ENCODE measurements at regions of chr12 and their contacts with region 1.

Region 1: GRCh38 chr12:85920324-85920947 is 46.3 kb downstream of the NTS start:
- DNase-seq: no peak
- H3K4me3 Mint-ChIP-seq: no peak overlapping the region
- H3K27ac Mint-ChIP-seq: no peak overlapping the region
- H3K4me1 Mint-ChIP-seq: no peaks in the 10 kb centered on the region
- H3K27me3 Mint-ChIP-seq: no peaks in the 10 kb centered on the region

Region 2: DNA sequence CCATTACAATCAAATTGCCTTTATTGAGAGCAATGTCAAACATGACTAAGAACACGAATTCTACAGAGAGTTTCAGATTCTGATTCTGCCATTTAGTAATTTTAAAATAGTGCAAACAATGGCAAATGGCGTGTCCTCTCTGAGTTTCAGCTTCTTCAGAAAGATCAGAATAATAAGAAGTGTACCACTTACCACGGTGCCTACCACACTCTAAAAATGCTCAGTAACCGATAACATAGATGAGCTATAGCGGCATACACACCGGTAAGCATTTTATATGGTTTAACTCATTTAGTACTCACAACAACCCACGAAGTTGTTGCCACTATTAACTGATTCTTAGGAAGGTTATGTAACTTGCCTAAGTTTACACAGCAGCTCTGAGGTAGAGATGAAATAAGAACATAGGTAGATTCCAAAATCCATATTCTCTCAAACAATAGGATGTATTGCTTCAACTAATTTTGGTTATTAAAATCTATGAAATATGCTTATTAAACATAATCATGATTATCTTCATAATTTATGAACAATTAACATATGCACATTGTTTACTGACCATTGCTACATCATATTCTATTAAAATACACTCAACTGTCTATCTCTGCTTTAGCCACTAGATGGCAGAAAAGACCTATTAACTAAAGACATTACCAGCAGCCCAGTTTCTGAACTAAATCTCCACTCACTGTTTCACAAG is 1046.2 kb before region 1 on chr12:
- CTCF ChIA-PET with region 1: interaction called, 4 read pairs
- intact Hi-C with region 1: loop called (anchors 1 kb)
- DNase-seq: no peak
- H3K4me3 Mint-ChIP-seq: no peak overlapping the region
- H3K27ac Mint-ChIP-seq: no peak overlapping the region
- H3K4me1 Mint-ChIP-seq: no peaks in the 10 kb centered on the region
- H3K27me3 Mint-ChIP-seq: no peaks in the 10 kb centered on the region

Region 3: GRCh38 chr12:85076688-85077430 is 843.6 kb before region 1 on chr12:
- CTCF ChIA-PET with region 1: no interaction called
- intact Hi-C with region 1: loop called (anchors 1 kb)
- DNase-seq: no peak
- H3K4me3 Mint-ChIP-seq: no peak overlapping the region
- H3K27ac Mint-ChIP-seq: no peak overlapping the region
- H3K4me1 Mint-ChIP-seq: no peaks in the 10 kb centered on the region
- H3K27me3 Mint-ChIP-seq: no peaks in the 10 kb centered on the region

Region 4: GRCh38 chr12:85280165-85280983 is 640.1 kb before region 1 on chr12 and contains the start of gene ALX1:
- CTCF ChIA-PET with region 1: no interaction called
- intact Hi-C with region 1: no loop called
- DNase-seq: peak; percentile 3
- H3K4me3 Mint-ChIP-seq: peak within 1 kb of the TSS; percentile 27
- H3K27ac Mint-ChIP-seq: no peak within 1 kb of the TSS
- H3K4me1 Mint-ChIP-seq: peaks cover 7% of the 10 kb centered on the region
- H3K27me3 Mint-ChIP-seq: peaks cover 46% of the 10 kb centered on the region
- total RNA-seq, gene ALX1: not detected

Region 5: GRCh38 chr12:85424581-85425348 is 495.7 kb before region 1 on chr12:
- CTCF ChIA-PET with region 1: no interaction called
- intact Hi-C with region 1: loop called (anchors 1 kb)
- DNase-seq: peak; percentile 50
- H3K4me3 Mint-ChIP-seq: no peak overlapping the region
- H3K27ac Mint-ChIP-seq: no peak overlapping the region
- H3K4me1 Mint-ChIP-seq: no peaks in the 10 kb centered on the region
- H3K27me3 Mint-ChIP-seq: no peaks in the 10 kb centered on the region

Region 6: DNA sequence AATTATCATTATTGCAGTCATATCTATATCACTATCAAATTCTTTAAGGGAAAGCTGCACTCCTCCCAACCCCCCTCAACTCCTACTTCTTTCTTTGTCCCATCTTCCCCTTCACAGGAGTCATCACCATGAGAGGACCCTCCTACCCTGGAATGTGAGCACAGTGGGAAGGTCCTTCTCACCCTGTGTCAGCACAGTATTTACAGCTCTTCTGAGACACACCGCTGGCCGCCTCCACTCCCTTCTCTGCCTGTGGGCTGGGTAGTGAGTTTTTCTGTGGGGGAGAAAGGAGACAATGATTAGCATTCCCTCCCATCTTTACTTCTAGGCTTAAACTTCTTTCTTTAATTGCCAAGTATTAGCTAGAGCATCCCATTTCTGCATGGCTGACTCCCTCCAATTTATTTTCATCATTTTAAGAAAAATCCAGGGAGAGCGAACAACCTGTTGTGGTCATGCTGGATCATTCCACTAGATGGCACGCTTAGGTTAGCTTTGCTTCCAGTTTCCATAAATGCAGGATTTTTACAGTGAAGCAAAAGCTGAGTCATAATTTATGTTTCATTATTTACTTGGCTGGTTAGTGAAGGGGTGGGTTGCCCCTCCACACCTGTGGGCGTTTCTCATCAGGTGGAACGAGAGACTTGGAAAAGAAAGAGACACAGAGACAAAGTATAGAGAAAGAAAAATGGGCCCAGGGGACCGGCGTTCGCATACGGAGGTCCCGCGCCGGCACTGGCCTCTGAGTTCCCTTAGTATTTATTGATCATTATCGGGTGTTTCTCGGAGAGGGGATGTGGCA is 451.9 kb before region 1 on chr12:
- CTCF ChIA-PET with region 1: interaction called, 6 read pairs
- intact Hi-C with region 1: loop called (anchors 1 kb)
- DNase-seq: peak; percentile 64
- H3K4me3 Mint-ChIP-seq: peak overlapping the region; percentile 72
- H3K27ac Mint-ChIP-seq: no peak overlapping the region
- H3K4me1 Mint-ChIP-seq: peaks cover 11% of the 10 kb centered on the region
- H3K27me3 Mint-ChIP-seq: peaks cover 11% of the 10 kb centered on the region

Region 7: GRCh38 chr12:85575120-85576096 is 345.0 kb before region 1 on chr12:
- CTCF ChIA-PET with region 1: interaction called, 5 read pairs
- intact Hi-C with region 1: loop called (anchors 1 kb)
- DNase-seq: peak; percentile 39
- H3K4me3 Mint-ChIP-seq: no peak overlapping the region
- H3K27ac Mint-ChIP-seq: no peak overlapping the region
- H3K4me1 Mint-ChIP-seq: no peaks in the 10 kb centered on the region
- H3K27me3 Mint-ChIP-seq: no peaks in the 10 kb centered on the region

Region 8: DNA sequence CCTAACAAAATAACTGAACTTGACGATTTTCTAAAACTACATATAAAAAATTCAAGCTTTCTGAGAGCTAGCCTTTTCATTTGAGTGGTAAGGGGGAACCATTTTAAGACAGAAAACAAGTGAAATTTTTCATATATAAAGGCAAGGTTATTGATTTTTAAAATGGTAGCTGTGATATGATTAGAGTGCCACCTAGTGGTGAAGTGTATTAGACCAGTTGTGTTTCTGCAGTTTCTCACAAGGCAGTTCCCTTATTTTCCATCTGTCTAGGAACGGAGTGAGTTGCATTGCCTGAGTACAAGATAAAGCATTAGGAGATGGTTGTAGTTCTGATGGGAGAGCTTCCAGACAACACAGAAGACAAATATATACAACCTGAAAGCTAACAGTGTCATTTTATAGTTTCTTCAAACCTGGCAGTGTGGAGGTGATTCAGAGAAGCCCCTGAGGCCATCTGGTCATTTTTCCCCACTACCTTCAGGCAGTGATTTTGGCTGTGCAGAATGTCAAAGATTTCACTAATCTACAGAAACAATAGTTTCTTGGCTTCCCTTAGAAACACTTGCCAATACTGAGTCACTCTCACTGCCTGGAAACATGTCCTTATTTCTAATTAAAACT is 1927.9 kb after region 1 on chr12:
- CTCF ChIA-PET with region 1: no interaction called
- intact Hi-C with region 1: loop called (anchors 1 kb)
- DNase-seq: no peak
- H3K4me3 Mint-ChIP-seq: no peak overlapping the region
- H3K27ac Mint-ChIP-seq: no peak overlapping the region
- H3K4me1 Mint-ChIP-seq: no peaks in the 10 kb centered on the region
- H3K27me3 Mint-ChIP-seq: peaks cover 7% of the 10 kb centered on the region

Measured in activated naive CD4-positive, alpha-beta T cell treated with anti-CD3 and anti-CD28 coated beads for 36 hours (primary cell).